Activated CD4-positive, alpha-beta memory T cell treated with anti-CD3 and anti-CD28 coated beads for 36 hours (primary cell): ENCODE measurements at regions of chr5 and their contacts with region 1.

Region 1: GRCh38 chr5:176415952-176416924 is at the start of gene CLTB:
- DNase-seq: peak; percentile 93
- H3K4me3 Mint-ChIP-seq: peak within 1 kb of the TSS; percentile 77
- H3K27ac Mint-ChIP-seq: peak within 1 kb of the TSS; percentile 65
- H3K4me1 Mint-ChIP-seq: peaks cover 36% of the 10 kb centered on the region
- H3K27me3 Mint-ChIP-seq: no peaks in the 10 kb centered on the region
- total RNA-seq, gene CLTB: 51.5 to 57.0 TPM

Region 2: GRCh38 chr5:176388444-176389134 is 27.6 kb before region 1 on chr5 and contains the starts of genes HIGD2A and NOP16:
- CTCF ChIA-PET with region 1: no interaction called
- POLR2A ChIA-PET with region 1: interaction called, 4 read pairs
- intact Hi-C with region 1: loop called (anchors 1 kb)
- DNase-seq: peak; percentile 100
- H3K4me3 Mint-ChIP-seq: peak within 1 kb of the TSS; percentile 99
- H3K27ac Mint-ChIP-seq: peak within 1 kb of the TSS; percentile 98
- H3K4me1 Mint-ChIP-seq: peaks cover 27% of the 10 kb centered on the region
- H3K27me3 Mint-ChIP-seq: no peaks in the 10 kb centered on the region
- total RNA-seq, gene HIGD2A: 112 to 119 TPM
- total RNA-seq, gene NOP16: 52.5 to 57.6 TPM

Region 3: DNA sequence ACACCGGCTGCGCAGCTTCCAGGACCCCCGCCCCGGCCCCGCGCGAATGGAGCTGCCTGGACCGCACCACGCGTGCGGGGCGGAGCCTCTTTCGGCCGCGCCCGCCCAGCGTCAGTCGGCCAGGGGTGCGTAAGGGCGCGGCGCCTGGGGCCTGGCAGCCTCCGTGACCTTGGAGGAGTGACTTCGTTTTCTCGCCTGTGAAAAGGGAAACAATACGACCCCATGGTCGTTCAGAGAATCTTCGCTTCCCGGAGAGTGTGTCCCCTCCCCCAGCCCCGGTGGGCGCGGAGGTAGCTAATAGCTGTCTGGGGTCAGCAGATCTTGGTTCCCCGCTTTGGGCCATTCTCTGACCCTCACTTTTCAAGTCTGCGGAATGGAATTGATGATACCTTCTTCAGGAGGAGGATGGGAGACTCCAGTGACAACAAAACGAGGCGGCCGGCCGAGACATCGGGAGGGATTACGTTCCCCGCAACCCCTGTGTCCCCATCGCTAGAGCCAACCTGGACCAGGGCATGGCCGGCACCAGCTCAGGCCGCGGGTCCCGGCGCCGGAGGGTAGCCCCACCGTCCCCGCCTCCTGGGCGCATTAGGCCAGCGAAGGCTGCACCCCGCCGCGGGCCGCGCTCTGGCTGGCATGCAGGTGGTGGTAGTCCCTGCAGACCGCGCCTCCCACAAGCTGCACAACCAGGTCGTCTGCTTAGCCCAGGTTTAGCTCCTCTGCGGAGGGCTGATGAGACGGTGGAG is 127.4 kb after region 1 on chr5:
- CTCF ChIA-PET with region 1: interaction called, 12 read pairs
- POLR2A ChIA-PET with region 1: interaction called, 6 read pairs
- intact Hi-C with region 1: no loop called
- DNase-seq: peak; percentile 84
- H3K4me3 Mint-ChIP-seq: peak overlapping the region; percentile 92
- H3K27ac Mint-ChIP-seq: peak overlapping the region; percentile 93
- H3K4me1 Mint-ChIP-seq: peaks cover 61% of the 10 kb centered on the region
- H3K27me3 Mint-ChIP-seq: no peaks in the 10 kb centered on the region

Region 4: DNA sequence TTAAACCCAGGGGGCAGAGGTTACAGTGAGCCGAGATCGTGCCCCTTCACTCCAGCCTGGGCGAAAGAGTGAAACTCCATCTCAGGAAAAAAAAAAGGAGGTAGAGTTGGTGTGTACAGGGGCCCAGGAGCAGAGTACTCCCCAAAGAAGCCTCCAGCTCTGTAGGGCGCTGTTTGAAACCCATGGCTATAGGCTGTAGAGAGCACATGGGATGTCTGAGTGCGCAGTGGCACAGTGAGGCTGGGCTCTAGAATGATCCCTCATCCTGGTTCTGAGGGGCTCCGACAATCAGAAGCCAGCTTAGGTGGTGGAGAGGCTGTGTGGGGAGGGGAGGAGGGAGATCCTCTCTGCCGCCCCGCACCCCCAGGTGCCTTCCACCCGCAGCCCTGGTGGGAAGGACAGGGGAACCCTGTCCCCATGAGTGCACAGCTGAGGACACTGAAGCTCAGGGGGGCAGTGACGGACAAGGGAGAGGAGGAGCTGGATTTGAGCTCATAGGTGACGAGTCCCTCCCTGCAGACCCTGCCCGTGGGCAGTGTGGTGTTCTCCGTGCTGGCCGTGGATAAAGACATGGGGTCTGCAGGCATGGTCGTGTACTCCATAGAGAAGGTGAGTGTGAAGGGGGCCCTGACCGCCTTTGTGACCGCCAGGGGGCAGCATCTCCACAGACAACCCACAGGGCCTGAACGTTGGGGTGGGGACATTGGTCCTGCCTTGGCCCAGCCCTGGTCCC is 157.5 kb after region 1 on chr5:
- CTCF ChIA-PET with region 1: interaction called, 12 read pairs
- POLR2A ChIA-PET with region 1: no interaction called
- intact Hi-C with region 1: loop called (anchors 5 kb)
- DNase-seq: peak; percentile 84
- H3K4me3 Mint-ChIP-seq: no peak overlapping the region
- H3K27ac Mint-ChIP-seq: no peak overlapping the region
- H3K4me1 Mint-ChIP-seq: no peaks in the 10 kb centered on the region
- H3K27me3 Mint-ChIP-seq: peaks cover 2% of the 10 kb centered on the region

Region 5: DNA sequence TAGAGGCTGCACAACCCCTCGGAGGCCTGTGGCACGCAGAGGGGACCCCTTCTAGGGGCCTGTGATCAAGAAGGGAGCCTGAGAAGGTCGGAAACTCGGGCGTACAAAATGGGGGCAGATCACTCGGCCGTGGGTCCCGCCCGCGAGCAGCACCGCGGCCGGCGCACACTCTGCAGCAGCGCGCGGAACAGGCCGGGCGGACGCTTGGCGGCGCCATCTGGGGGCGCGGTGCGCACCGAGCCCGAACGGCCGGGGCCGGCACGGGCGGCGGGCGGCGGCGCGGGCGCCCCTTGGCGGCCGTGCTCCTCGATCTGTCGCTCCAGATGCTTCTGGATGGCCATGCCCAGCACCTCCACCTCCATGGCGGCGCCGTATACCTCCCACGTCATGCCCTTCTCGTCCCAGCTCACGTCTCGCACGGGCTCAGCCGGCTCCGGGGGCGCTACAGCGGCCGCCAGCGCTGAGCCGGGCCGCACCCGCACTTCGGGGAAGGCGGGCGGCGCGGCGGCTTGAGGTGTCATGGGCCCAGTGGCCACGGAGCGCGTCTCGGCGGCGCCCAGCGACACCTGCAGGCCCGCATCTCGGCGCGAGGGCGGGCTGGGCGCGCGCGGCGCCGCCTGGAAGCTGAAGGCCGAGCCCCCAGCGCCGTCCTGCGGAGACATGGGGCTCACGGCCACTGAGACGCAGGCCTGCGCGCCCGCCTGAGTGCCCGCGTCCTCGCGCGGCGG is 180.6 kb after region 1 on chr5:
- CTCF ChIA-PET with region 1: interaction called, 15 read pairs
- POLR2A ChIA-PET with region 1: no interaction called
- intact Hi-C with region 1: loop called (anchors 5 kb)
- DNase-seq: peak; percentile 74
- H3K4me3 Mint-ChIP-seq: peak overlapping the region; percentile 56
- H3K27ac Mint-ChIP-seq: peak overlapping the region; percentile 49
- H3K4me1 Mint-ChIP-seq: peaks cover 10% of the 10 kb centered on the region
- H3K27me3 Mint-ChIP-seq: no peaks in the 10 kb centered on the region